HEK293 (cell line): ENCODE measurements at regions of chr6 and their contacts with region 1.

Region 1: GRCh38 chr6:21933351-21933750 is 339.8 kb downstream of the SOX4 start:
- H3K4me3 ChIP-seq: no peak overlapping the region
- H3K27ac ChIP-seq: no peak overlapping the region
- H3K4me1 ChIP-seq: no peaks in the 10 kb centered on the region
- CTCF ChIP-seq: no peak

Region 2: DNA sequence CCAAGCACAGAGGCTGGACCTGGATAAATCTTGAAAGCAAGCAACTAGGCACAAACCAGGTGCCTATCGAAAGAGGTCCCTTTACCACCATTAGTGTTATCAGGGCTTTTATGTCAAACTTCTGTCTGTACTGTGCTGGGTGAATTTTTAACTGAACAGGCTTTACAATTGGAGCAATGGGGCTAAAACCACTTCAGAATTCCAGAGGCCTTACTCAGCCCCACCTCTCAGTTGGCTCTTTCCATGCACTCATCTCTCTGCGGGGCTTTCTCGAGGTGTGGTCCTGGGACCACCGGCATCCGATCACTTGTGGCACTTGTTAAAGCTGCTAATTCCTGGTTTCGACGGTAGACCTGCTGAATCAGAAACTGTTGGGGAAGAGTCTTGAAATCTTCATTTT is 107.3 kb before region 1 on chr6:
- CTCF ChIA-PET with region 1: no interaction called
- POLR2A ChIA-PET with region 1: interaction called, 10 read pairs
- H3K4me3 ChIP-seq: no peak overlapping the region
- H3K27ac ChIP-seq: peak overlapping the region; percentile 47
- H3K4me1 ChIP-seq: peaks cover 28% of the 10 kb centered on the region
- CTCF ChIP-seq: no peak

Region 3: GRCh38 chr6:22350109-22350508 is 416.8 kb after region 1 on chr6:
- CTCF ChIA-PET with region 1: no interaction called
- POLR2A ChIA-PET with region 1: no interaction called
- H3K4me3 ChIP-seq: no peak overlapping the region
- H3K27ac ChIP-seq: no peak overlapping the region
- H3K4me1 ChIP-seq: peaks cover 12% of the 10 kb centered on the region
- CTCF ChIP-seq: no peak